ENCODE measurements at regions of chr4 and their contacts with region 1.

Region 1: DNA sequence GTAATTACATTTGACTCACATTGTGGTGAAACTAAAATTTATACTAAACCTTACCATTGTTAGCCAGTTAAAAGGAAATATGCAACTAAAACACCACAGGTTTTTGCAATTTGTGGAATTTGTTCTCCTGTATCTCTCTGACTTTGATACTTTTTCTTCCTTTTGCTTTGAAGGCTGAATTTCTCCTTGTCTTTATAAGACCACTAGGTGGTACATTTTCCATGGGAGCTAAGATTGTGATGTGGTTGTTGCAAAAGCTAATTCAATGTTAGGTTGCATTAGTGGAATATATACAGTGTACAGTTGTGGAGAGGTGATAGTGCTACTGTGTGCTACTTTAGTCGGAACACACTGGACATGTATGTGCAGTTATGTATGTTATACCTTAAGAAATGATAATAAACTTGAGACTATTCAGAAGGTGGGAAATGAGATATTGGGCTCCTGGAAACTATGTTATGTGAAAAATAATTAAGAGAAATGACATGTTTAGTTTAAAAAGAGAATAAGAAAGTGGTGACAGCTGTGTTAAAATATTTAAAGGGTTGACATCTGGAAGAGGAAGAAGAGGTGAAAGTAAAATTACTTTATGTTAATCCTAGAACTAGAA is 70.3 kb downstream of the ARL9 start:
- DNase-seq: no peak
- ATAC-seq: no peak
- H3K4me3 Mint-ChIP-seq: no peak overlapping the region
- H3K27ac Mint-ChIP-seq: no peak overlapping the region
- H3K4me1 Mint-ChIP-seq: peaks cover 2% of the 10 kb centered on the region
- H3K27me3 Mint-ChIP-seq: peaks cover 5% of the 10 kb centered on the region
- CTCF ChIP-seq: no peak

Region 2: DNA sequence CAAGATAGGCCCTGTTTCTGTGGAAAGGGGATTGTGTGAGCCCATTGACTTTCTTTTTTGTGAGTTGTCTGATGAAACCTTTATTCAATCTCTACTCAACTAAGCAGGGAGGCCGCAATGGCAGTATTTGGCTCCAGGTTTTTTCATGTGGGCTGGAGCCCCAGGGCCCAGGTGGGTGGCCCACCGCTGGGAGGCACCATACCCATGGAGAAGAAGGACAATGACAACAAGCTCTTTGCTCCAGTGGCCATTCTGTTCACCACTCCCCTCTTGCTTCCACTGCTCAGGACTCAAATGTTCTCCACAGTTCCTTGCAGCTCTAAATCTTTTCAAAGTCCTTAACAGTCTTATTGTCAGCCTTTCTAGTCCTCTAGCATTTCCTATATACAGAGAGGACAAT is 51.0 kb after region 1 on chr4:
- CTCF ChIA-PET with region 1: no interaction called
- POLR2A ChIA-PET with region 1: no interaction called
- intact Hi-C with region 1: no loop called
- DNase-seq: no peak
- ATAC-seq: no peak
- H3K4me3 Mint-ChIP-seq: no peak overlapping the region
- H3K27ac Mint-ChIP-seq: no peak overlapping the region
- H3K4me1 Mint-ChIP-seq: no peaks in the 10 kb centered on the region
- H3K27me3 Mint-ChIP-seq: peaks cover 3% of the 10 kb centered on the region
- CTCF ChIP-seq: no peak

Region 3: DNA sequence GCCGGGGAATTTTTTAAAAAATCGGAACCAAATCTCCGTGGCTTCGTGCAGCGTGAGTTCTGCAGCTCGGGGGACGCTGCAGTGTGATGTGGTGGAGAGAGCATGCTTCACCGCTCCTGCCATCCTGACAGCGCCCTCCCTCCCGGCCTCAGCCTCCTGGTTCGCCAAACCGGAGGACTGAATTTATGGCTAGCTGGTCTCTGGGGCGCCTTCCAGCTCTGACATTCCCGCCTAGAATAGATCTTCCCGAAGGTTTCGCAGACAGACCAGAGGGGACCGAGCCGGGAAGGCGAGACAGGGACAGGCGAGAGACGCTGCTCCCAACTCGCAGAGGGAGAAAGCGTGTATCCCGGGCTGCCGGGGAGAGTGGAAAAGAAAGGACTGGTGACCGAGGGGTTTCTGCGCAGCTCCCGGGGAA is 79.3 kb after region 1 on chr4:
- CTCF ChIA-PET with region 1: no interaction called
- POLR2A ChIA-PET with region 1: no interaction called
- intact Hi-C with region 1: loop called (anchors 5 kb)
- DNase-seq: peak; percentile 23
- ATAC-seq: peak; percentile 25
- H3K4me3 Mint-ChIP-seq: peak overlapping the region; percentile 92
- H3K27ac Mint-ChIP-seq: peak overlapping the region; percentile 46
- H3K4me1 Mint-ChIP-seq: peaks cover 65% of the 10 kb centered on the region
- H3K27me3 Mint-ChIP-seq: peaks cover 2% of the 10 kb centered on the region
- CTCF ChIP-seq: no peak